BJ (cell line): ENCODE measurements at regions of chr2 and their contacts with region 1.

Region 1: DNA sequence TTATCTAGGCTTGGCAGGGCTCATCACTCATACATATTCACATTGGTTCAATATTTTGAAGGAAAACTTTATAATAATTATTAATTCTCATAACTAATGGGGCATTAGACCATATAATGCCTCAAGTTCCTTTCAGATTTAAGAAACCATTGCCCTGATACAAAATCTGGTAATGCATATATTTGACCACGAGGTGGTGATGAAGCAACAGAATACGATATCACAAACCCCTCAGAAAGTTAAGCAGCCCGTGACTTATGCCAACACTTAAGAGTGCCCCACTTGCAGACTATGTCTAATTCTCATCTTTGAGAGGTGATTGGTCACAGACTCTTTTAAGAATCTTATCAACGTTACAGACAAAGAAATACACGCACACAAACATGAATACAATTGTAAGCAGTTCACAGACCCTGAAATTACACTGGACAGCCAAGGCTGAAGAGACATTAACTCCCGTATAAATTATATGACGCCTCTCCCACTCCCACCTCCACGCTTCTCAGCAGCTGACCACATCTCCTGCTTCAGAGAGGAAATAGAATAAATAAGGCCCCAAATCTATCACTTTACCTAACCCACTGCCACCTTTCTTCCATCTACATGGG is 20.7 kb upstream of the DNAH6 start:
- DNase-seq: peak; percentile 26
- H3K4me3 ChIP-seq: no peak overlapping the region
- H3K27me3 ChIP-seq: no peaks in the 10 kb centered on the region
- CTCF ChIP-seq: peak; percentile 53

Region 2: GRCh38 chr2:84881581-84882414 is 386.2 kb after region 1 on chr2:
- CTCF ChIA-PET with region 1: interaction called, 12 read pairs
- POLR2A ChIA-PET with region 1: no interaction called
- DNase-seq: no peak
- H3K4me3 ChIP-seq: peak overlapping the region; percentile 44
- H3K27me3 ChIP-seq: peaks cover 9% of the 10 kb centered on the region
- CTCF ChIP-seq: peak; percentile 80

Region 3: GRCh38 chr2:84905181-84906107 is 409.8 kb after region 1 on chr2 and contains the start of gene TMSB10:
- CTCF ChIA-PET with region 1: no interaction called
- POLR2A ChIA-PET with region 1: interaction called, 24 read pairs
- DNase-seq: no peak
- H3K4me3 ChIP-seq: peak within 1 kb of the TSS; percentile 80
- H3K27me3 ChIP-seq: no peaks in the 10 kb centered on the region
- CTCF ChIP-seq: no peak
- polyA plus RNA-seq, gene TMSB10: 2,234 and 3,073 TPM in 2 replicates